ENCODE measurements at regions of chr1 and their contacts with region 1.

Region 1: GRCh38 chr1:185720633-185721272 is 13.4 kb upstream of the HMCN1 start:
- DNase-seq: peak in 2 of 4 donors; percentile 49 to 63
- ATAC-seq: peak; percentile 81
- H3K4me3 ChIP-seq: no peak overlapping the region
- H3K27ac ChIP-seq: no peak overlapping the region
- H3K4me1 ChIP-seq: no peaks in the 10 kb centered on the region
- H3K27me3 ChIP-seq: no peaks in the 10 kb centered on the region
- CTCF ChIP-seq: peak; percentile 42 to 46

Region 2: DNA sequence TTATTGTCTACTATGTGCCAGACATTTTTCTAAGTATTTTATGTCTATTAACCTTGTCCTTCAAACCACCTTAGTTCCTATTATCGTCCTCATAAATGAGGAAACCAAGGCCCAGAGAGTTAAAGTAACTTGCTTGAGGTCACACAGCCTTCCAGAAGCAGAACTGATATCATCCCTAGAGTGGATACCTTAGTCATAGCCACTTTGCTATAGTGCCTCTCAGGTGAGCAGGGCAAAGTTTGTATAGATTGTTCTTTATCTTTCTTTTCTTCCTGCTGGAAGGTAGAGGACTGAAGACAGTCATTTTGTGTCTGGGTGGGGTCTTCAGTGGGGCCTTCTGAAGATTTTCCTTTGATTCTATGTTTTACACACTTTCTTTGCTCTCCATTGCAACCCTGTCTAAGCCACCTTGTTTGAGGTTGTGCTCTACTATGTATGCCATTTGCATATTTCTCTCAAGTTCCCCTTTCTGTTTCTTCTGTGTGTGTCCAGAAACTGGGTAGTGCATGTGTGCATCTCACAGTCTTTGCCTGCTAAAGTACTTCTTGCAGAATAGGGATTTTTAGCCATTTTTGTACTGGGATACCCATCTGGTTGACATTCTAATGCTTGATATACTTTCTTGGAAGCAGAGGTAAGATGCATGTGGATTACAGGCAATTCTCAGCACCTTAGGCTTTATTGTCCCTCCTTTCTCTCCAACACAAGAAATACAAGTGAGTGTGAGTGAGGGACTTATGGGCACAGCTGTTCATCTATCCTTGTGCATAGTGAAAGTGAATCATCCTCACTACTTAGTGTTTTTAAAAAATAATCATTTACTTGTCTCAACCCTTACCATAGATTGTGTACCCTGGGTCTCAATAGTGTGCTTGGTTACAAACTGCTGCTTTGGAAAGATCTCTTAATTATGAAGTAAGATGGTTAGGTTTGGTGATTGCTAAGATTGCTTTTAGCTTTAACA is 194.1 kb before region 1 on chr1:
- intact Hi-C with region 1: no loop called
- DNase-seq: no peak
- ATAC-seq: peak; percentile 46
- H3K4me3 ChIP-seq: no peak overlapping the region
- H3K27ac ChIP-seq: no peak overlapping the region
- H3K4me1 ChIP-seq: peaks cover 0 to 5% of the 10 kb centered on the region in 2 donors
- H3K27me3 ChIP-seq: no peaks in the 10 kb centered on the region
- CTCF ChIP-seq: no peak

Region 3: GRCh38 chr1:185608177-185608576 is 112.6 kb before region 1 on chr1:
- intact Hi-C with region 1: no loop called
- DNase-seq: no peak
- ATAC-seq: no peak
- H3K4me3 ChIP-seq: no peak overlapping the region
- H3K27ac ChIP-seq: no peak overlapping the region
- H3K4me1 ChIP-seq: no peaks in the 10 kb centered on the region
- H3K27me3 ChIP-seq: no peaks in the 10 kb centered on the region
- CTCF ChIP-seq: no peak

Region 4: GRCh38 chr1:186212544-186213226 is 491.9 kb after region 1 on chr1:
- intact Hi-C with region 1: loop called in 1 of 2 experiments (anchors 10 kb)
- DNase-seq: peak in 2 of 4 donors; percentile 67 to 88
- ATAC-seq: peak; percentile 99
- H3K4me3 ChIP-seq: no peak overlapping the region
- H3K27ac ChIP-seq: no peak overlapping the region
- H3K4me1 ChIP-seq: no peaks in the 10 kb centered on the region
- H3K27me3 ChIP-seq: no peaks in the 10 kb centered on the region
- CTCF ChIP-seq: peak; percentile 66 to 81

Measured in left lung (tissue), 14 donors.